Activated CD4-positive, alpha-beta T cell treated with anti-CD3 and anti-CD28 coated beads, Interleukin-2, amount 10 ng/mL, durations not matched to agents 7 days and 5 days (primary cell): ENCODE measurements at regions of chr2 and their contacts with region 1.

Region 1: DNA sequence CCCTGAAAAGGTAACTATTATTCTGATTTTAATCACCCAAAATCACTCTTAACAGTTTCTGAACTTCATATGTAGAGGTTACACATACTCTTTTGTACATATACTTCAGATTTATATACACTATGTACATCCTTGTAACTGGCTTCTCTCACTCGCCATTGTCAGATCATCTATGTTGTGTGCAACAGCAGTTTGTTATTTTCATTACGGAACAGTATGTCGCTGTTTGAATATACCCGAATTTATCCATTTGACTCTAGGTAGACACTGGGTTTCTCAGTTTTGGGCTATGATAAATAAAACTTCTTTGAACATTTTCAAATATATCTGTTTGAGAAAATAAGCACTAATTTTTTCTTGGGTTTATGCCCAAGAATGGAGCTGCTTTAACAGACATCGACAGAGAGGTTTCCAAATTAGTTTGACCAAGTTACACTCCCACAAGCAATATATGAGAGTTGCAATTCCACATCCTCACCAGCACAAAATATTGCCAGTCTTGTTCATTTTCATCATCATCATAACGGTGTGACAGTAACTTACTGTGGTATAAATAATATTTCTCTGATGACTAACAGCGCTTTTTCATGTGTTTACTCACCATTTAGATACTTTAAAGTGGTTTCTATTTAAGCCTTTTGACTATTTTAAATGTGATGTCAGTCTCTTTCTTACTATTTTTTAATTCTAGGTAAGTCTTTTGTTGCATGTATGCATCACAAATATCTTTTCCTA is 80.9 kb downstream of the SMC6 start:
- DNase-seq: no peak
- H3K4me3 Mint-ChIP-seq: no peak overlapping the region
- H3K27ac Mint-ChIP-seq: no peak overlapping the region
- H3K4me1 Mint-ChIP-seq: no peaks in the 10 kb centered on the region
- H3K27me3 Mint-ChIP-seq: no peaks in the 10 kb centered on the region

Region 2: DNA sequence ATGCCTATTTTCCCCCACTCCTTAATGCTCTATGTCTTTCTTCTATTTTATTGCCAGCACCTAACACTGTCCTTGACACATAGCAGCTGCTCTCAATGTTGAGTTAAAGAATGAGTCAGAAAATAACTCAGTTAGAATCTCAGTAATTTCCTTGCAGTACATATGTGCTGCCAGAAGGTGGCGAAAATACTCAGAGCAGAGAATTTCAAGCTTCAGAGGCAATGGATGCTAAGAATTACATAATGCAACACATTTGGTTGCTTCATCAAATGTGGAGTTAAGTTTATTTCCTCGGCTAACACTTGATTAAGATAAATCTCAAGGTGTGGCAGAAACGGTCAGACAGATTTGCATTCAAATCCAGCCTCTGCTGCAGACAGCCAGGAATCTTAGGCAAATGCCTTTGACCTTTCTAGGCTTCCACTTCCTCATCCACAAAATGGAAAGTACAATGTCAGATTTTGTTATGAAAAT is 26.6 kb before region 1 on chr2:
- CTCF ChIA-PET with region 1: interaction called, 11 read pairs
- POLR2A ChIA-PET with region 1: no interaction called
- DNase-seq: peak; percentile 61
- H3K4me3 Mint-ChIP-seq: no peak overlapping the region
- H3K27ac Mint-ChIP-seq: no peak overlapping the region
- H3K4me1 Mint-ChIP-seq: peaks cover 1% of the 10 kb centered on the region
- H3K27me3 Mint-ChIP-seq: no peaks in the 10 kb centered on the region

Region 3: DNA sequence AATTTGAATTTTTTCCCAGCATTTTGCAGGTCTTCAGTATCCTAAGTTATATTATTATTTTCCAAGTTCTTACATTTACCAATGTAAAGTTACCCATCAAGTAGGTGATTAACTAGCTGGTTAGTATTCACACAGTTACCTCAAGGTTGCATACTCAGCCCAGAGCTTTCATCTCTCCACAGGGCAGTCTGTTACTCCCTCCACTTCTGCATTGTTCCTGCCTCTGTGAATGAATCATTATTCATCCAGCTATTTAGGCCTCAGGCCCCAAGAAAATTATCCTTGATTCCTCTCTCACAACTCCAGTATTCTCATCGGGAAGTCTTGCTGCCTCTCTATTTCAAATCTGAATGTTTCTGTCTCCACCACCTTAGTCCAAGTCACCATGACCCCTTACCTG is 11.3 kb before region 1 on chr2:
- CTCF ChIA-PET with region 1: interaction called, 20 read pairs
- POLR2A ChIA-PET with region 1: no interaction called
- DNase-seq: no peak
- H3K4me3 Mint-ChIP-seq: no peak overlapping the region
- H3K27ac Mint-ChIP-seq: no peak overlapping the region
- H3K4me1 Mint-ChIP-seq: peaks cover 19% of the 10 kb centered on the region
- H3K27me3 Mint-ChIP-seq: no peaks in the 10 kb centered on the region

Region 4: DNA sequence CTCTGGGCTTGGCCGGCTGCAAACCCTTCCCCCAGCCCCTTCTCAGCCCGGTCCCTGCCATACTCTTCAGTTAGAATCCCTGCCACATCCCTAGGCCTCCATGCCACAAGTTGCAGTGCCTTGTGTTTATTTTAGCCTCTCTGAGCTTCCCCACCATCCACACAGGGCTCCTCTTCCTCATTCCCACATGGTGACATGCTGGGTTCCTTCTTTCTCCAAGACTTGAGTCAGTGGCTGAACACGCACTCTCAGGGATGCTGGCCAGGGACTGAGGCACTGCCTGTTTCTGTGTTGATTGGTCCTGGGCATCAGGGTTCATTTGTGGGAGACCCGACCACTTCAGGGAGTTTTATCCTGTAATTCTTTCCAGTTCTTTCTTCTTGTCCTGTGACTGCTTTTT is 262.0 kb after region 1 on chr2:
- CTCF ChIA-PET with region 1: no interaction called
- POLR2A ChIA-PET with region 1: no interaction called
- DNase-seq: no peak
- H3K4me3 Mint-ChIP-seq: no peak overlapping the region
- H3K27ac Mint-ChIP-seq: no peak overlapping the region
- H3K4me1 Mint-ChIP-seq: no peaks in the 10 kb centered on the region
- H3K27me3 Mint-ChIP-seq: no peaks in the 10 kb centered on the region